ENCODE measurements at regions of chr1 and their contacts with region 1.

Region 1: DNA sequence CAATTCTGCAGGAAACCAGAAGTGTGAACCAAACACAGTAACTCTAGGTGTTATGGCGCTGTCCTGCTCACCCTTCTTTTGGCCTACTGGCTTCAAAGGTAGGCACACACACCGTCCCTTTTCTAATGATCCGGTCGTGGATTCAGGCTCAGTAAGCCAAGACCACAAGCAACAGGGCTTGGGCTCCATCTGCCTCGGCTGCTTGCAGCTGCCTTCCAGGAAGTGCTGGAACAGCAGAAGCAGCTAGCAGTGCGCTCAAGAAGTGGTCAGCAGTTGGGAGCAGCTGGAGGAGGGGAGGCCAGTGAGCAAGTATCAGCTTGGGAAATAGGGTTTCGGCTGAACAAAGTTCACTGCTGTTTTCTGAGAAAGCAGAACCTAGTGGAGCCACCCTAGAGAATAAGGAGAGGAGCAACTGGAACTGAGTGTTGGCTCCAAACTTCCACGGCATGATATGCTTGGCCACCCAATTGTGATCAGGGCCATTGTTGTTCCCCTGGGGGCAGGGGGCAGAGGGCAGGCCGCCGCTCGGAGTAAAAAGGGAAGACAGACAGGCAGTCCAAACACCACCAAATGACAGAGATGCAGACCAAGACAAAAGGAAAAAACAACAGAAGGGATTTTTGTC is 173.4 kb downstream of the TOMM20 start:
- DNase-seq: no peak
- H3K4me3 Mint-ChIP-seq: no peak overlapping the region
- H3K27ac Mint-ChIP-seq: peak overlapping the region; percentile 85
- H3K4me1 Mint-ChIP-seq: peaks cover 54% of the 10 kb centered on the region
- H3K27me3 Mint-ChIP-seq: no peaks in the 10 kb centered on the region

Region 2: GRCh38 chr1:234918181-234918841 is 36.9 kb before region 1 on chr1:
- CTCF ChIA-PET with region 1: no interaction called
- POLR2A ChIA-PET with region 1: no interaction called
- DNase-seq: no peak
- H3K4me3 Mint-ChIP-seq: no peak overlapping the region
- H3K27ac Mint-ChIP-seq: no peak overlapping the region
- H3K4me1 Mint-ChIP-seq: peaks cover 2% of the 10 kb centered on the region
- H3K27me3 Mint-ChIP-seq: no peaks in the 10 kb centered on the region

Region 3: DNA sequence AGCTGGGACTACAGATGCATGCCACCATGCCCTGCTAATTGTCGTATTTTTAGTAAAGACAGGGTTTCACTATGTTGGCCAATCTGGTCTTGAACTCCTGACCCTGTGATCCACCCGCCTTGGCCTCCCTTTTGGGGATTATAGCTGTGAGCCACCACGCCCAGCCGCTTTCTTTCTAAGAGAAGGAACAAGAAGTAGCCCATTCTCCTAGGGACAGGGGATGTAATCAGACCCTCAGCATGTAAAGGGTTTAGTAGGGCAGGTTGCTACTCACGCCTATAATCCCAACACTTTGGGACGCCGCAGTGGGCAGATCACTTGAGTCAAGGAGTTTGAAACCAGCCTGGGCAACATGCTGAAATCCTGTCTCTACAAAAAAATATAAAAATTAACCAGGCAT is 16.3 kb before region 1 on chr1:
- CTCF ChIA-PET with region 1: interaction called, 40 read pairs
- POLR2A ChIA-PET with region 1: no interaction called
- DNase-seq: no peak
- H3K4me3 Mint-ChIP-seq: no peak overlapping the region
- H3K27ac Mint-ChIP-seq: no peak overlapping the region
- H3K4me1 Mint-ChIP-seq: peaks cover 3% of the 10 kb centered on the region
- H3K27me3 Mint-ChIP-seq: no peaks in the 10 kb centered on the region

Region 4: DNA sequence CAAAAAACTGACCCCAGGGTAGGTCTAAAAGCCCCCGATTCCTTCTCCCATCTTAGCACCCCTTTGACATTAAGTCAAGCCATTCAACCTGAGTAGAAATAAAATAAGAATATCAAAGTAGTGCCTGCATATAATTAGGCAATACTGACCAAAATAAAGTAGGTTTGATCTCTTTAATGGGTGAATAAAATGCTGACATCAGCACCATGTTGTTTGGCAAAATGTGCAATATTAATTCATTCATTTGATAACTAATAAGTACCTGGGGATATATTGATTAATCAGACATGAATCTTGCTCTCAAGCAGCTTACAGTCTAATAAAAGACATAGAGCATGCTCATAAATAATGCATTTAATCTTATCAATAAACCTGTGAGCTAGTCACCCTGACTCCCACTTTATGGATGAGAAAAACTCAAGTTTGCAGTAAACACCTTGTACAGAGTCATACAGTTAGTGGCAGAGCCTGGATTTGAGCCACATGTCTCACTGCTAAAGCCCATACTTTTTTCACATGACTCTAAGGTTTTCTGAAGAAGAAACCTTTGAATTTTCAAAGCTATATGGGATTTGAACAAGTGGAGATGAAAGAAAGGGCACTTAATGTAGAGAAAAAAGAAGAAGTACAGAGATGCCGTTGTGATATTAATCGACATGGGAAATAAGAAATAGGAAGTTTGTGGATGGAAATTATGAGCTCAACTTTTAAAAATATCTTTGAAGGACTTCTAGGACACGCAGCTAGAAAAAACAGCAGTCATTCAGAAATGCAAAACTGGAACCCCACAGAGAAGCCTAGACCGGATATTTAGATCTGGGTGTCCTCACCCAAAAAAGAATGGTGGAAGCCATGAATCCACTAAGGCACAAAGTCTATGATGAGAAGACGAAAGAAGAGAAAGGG is 10.5 kb before region 1 on chr1:
- CTCF ChIA-PET with region 1: interaction called, 40 read pairs
- POLR2A ChIA-PET with region 1: no interaction called
- DNase-seq: no peak
- H3K4me3 Mint-ChIP-seq: no peak overlapping the region
- H3K27ac Mint-ChIP-seq: no peak overlapping the region
- H3K4me1 Mint-ChIP-seq: peaks cover 8% of the 10 kb centered on the region
- H3K27me3 Mint-ChIP-seq: peaks cover 4% of the 10 kb centered on the region